ENCODE measurements at regions of chr16 and their contacts with region 1.

Region 1: DNA sequence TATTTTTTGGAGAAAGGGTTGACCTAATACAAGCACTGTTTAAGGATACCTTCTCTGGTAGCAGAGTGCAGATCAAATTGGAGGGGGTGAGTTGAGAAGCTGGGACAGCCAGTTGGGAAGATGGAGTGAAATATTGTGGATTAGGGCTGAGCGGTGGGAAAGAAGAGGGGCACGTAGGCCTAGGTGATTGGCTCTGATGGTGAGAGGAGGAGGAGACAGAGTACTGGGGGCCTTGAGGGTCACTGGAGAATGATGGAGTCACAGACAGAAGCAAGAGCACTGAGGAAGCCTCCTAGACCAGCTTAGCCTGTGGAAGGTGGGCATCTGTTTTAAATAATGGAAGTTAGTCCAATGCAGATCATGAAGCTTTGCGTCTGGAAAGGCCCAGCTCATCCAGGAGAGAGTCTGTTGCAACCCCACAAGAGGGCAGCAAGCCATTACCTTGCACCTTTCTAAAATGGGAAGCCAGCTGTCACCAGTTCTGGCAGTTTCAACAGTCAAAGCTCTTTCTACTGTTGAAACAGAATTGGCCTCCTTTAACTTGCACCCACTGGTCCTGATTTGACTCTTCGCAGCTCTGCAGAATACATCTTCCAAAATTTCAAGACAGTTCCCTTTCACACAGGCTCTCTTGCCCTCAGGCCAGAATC is 11.8 kb downstream of the SLC9A5 start:
- DNase-seq: peak; percentile 74
- CTCF ChIP-seq: peak; percentile 71

Region 2: GRCh38 chr16:67246934-67247697 is 13.4 kb before region 1 on chr16 and contains the start of gene FHOD1:
- CTCF ChIA-PET with region 1: interaction called, 16 read pairs
- POLR2A ChIA-PET with region 1: interaction called, 4 read pairs
- DNase-seq: peak; percentile 97
- CTCF ChIP-seq: no peak

Region 3: DNA sequence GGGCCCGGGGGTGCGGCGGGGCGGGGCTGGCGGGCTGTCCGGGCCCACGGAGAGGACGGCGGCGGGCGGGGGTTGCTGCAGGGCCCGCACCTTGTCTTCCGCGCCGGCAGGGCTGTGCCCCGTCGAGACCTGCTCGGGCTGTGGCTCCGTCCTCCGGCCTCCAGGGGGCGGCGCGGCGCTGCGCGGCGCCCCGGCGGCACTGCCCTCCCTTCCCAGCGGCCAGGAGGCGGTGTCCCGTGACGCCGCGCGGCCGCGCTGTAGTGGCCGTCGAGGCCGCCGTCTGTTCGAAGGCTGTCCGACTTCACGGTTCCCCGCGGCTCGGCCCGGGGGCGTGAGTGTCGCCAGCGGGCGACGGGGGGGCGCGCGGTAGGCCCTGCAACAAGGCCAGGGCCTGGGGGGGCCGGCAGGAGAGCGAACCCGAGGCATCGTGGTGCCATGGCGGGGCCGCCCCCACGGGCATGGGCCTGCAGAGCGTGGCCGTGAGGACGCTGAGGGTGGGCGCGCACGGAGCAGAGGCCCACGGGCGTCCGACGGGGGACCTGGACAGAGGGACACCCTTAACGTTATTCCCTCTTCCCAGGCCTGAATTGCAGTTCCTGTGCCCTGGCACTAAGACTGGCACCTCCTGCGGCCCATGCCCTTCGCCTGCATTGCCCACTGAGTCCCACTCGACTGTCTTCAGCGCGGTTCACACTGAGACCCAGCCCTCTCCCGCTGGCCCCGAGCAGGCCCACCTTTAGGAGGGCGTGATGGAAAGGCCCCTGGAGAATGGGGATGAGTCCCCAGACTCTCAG is 18.9 kb after region 1 on chr16 and contains the start of gene PLEKHG4:
- CTCF ChIA-PET with region 1: interaction called, 16 read pairs
- POLR2A ChIA-PET with region 1: no interaction called
- DNase-seq: peak; percentile 96
- CTCF ChIP-seq: peak; percentile 89

Region 4: GRCh38 chr16:67326472-67327309 is 66.1 kb after region 1 on chr16 and contains the starts of genes KCTD19 and LRRC36:
- CTCF ChIA-PET with region 1: interaction called, 18 read pairs
- POLR2A ChIA-PET with region 1: no interaction called
- DNase-seq: peak; percentile 80
- CTCF ChIP-seq: peak; percentile 52

Region 5: GRCh38 chr16:67399181-67399733 is 138.7 kb after region 1 on chr16:
- CTCF ChIA-PET with region 1: interaction called, 29 read pairs
- POLR2A ChIA-PET with region 1: no interaction called
- DNase-seq: peak; percentile 85
- CTCF ChIP-seq: peak; percentile 70

Region 6: DNA sequence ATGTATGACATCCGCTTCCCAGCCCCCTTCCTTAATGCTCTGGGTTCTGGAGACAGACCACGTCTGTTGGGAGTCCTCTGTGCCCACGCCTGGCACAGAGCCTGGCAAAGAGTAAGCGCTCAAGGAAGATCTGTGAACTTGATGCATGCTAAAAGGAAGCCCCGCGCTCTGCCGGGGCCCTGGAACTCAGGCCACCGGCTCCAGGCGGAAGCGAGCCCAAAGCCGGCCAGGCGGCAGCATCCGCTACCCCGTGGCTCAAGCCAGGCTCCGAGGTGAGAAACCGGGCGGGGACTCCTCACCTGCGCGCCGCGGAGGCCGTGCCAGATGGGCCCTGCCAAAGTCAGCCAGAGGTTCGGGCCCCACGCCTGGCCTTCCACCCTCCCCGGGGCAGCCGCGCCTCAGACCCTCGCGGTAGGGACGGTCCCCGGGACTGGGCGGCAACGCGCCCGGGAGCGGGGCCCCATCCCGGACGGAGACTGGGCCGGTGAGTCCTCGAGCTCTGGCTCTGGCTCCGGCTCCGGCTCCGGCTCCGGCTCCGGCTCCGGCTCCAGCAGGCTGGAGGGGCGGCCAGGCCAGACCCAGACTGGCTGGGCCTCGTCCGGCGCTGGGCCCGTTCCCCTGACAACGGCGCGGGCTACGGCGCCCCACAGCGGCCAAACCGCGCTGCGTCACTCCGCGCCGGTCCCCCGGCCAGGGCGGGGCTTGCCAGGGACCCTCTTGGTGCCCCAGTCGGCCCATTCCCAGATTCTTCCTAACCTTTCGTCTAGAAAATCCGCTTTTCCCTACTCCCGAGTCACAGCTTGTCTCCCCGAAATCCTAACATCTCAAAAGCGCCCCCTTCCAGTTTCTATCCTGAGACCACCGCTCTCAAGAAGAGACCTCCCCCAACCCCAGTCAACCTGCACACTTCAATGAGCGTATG is 155.6 kb after region 1 on chr16 and contains the start of gene ZDHHC1:
- CTCF ChIA-PET with region 1: interaction called, 14 read pairs
- POLR2A ChIA-PET with region 1: no interaction called
- DNase-seq: peak; percentile 87
- CTCF ChIP-seq: peak; percentile 76

Measured in GM10248 (cell line).